Activated CD4-positive, alpha-beta memory T cell treated with anti-CD3 and anti-CD28 coated beads, Interleukin-2, amount 10 ng/mL, durations not matched to agents 7 days and 5 days (primary cell): ENCODE measurements at regions of chr17 and their contacts with region 1.

Region 1: DNA sequence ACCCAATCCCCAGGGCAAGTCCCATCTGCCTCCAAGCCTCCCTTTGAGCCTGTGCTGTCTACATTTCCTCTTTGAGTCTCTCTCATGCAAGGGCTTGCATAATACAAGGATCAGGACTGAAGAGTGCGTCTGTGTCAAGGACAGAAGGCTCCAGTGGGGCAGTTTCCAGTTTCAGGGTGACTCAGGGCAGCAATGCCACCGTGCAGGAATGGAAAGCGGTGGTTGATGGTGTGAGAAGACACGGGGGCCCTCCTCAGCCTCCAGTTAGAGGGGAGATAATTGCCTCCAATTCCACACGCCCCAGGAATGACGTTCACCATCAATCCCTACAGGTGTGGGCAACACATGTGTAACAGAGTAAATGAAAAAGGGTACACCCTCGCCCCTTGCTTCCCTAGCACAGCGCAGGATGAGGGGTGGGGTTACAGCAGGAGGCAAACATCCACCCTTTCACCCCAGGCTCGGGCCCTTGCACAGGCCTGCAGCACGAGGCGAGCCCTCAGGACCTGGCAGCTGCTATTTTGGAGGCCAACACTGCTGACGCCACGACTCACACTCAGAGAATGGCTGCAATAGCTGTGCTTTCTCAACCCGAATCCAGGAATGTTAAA is 24.8 kb upstream of the SLC25A19 start:
- DNase-seq: no peak
- H3K4me3 Mint-ChIP-seq: no peak overlapping the region
- H3K27ac Mint-ChIP-seq: no peak overlapping the region
- H3K4me1 Mint-ChIP-seq: peaks cover 35% of the 10 kb centered on the region
- H3K27me3 Mint-ChIP-seq: no peaks in the 10 kb centered on the region

Region 2: DNA sequence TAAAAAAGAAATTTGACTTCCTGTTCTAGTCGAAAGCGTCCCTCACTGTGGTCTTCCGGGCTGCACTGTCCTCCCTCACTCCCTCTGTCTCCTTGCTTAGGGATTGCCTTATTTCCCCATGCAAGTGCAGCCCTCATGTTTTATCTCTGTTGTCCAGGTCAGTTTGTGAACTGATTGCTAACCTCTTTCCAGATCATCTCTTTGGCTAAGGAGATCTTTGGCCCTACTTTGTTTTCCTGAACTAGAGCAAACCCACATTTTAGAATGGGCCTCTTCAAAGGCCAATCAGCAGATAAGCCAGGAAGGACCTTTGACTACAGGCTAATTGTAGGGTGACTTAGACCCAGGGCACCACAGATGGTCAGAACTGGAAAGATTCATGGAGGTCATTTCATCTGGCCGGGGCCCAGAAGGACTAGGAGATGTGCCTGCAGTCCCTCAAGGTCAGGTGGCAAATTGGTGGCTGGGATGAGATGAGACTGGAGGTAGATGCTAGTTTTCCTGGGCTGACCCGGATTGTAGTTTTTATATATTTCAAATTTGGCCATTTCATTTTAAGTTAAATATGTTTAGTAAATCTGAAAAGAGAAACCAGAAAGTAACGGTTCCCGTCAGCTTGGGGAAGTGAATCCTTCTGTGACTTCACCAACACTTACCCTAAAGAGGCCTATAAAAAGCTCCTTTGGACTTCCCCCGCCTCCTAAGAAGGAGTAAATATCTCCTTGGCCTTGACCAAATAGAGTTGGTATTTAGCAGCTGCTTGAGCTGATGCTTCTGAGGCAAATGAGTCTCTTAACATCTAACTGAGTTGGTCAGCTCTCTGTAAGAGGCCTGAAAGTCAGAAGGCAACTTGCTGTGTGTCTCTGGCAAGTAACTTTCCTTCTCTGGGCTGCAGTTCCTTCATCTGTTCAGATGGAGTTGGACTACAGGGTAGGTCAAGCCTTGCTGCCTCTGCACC is 18.6 kb before region 1 on chr17:
- CTCF ChIA-PET with region 1: interaction called, 4 read pairs
- POLR2A ChIA-PET with region 1: interaction called, 16 read pairs
- DNase-seq: no peak
- H3K4me3 Mint-ChIP-seq: peak overlapping the region; percentile 46
- H3K27ac Mint-ChIP-seq: peak overlapping the region; percentile 87
- H3K4me1 Mint-ChIP-seq: peaks cover 36% of the 10 kb centered on the region
- H3K27me3 Mint-ChIP-seq: no peaks in the 10 kb centered on the region